BJ (cell line): ENCODE measurements at regions of chr11 and their contacts with region 1.

Region 1: GRCh38 chr11:82867495-82868082 is 32.6 kb downstream of the PRCP start:
- DNase-seq: no peak
- H3K4me3 ChIP-seq: no peak overlapping the region
- H3K27me3 ChIP-seq: no peaks in the 10 kb centered on the region
- CTCF ChIP-seq: peak; percentile 63

Region 2: DNA sequence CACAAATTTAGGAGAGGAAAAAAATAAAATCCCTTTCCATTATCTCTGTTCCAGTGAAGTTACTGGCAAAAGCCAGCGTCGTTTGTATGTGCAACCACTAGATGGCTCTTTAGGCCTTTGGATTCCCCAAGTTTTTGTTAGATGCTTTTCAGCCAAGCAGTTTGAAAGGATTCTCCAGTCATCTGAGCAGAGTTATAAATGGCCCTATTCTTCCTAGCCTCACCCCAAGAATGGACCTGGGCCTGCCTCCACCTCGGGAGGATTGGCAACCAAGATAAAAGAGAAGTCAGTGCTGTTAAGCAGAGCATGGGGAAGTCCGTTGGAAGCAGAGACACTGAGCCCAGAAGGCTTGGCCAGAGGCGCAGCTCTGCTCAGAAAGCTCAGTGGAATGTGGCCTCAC is 149.3 kb before region 1 on chr11:
- CTCF ChIA-PET with region 1: interaction called, 16 read pairs
- POLR2A ChIA-PET with region 1: no interaction called
- DNase-seq: peak; percentile 6
- H3K4me3 ChIP-seq: no peak overlapping the region
- H3K27me3 ChIP-seq: peaks cover 7% of the 10 kb centered on the region
- CTCF ChIP-seq: peak; percentile 85

Region 3: GRCh38 chr11:82775736-82776346 is 91.7 kb before region 1 on chr11:
- CTCF ChIA-PET with region 1: interaction called, 19 read pairs
- POLR2A ChIA-PET with region 1: no interaction called
- DNase-seq: no peak
- H3K4me3 ChIP-seq: no peak overlapping the region; the same call in 1 of the 2 replicates
- H3K27me3 ChIP-seq: peaks cover 2% of the 10 kb centered on the region; the same call in 1 of the 2 replicates
- CTCF ChIP-seq: peak; percentile 90

Region 4: DNA sequence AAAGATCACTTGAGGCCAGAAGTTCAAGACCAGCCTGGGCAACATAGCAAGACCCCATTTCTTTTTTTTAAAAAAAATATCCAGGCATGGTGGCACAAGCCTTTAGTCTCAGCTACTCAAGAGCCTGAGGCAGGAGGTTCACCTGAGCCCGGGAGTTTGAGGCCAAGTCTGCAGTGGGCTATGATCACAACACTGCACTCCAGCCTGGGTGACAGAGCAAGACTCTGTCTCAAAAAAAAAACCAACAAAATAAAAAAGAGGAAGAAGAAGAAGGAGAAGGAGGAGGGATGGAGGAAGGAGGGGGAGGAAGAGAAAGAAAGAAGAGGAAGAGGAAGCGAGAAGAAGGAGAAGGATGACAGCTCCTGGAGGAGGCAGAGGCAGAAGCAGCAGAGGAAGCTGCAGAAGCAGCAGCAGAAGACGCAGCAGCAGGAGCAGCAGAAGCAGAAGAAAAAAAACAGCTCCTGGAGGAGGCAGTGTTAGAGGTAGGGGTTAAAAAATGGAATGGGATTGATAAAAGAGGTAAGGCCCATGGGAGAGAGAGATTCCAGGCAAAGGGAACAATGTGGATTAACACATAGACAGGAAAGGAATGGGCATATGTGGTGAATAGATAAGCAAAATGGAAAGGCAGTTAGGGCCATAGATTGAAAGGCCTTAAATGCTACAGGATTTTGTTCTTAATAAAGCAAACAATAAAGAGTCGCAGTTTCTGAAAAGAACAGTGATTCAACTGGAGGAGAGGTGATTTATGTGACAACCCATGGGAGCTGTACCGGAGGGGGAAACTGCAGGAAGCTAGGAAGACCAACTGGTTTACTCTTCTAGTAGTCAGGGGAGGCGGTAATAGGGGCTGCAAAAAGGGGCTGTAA is 21.8 kb after region 1 on chr11:
- CTCF ChIA-PET with region 1: interaction called, 20 read pairs
- POLR2A ChIA-PET with region 1: no interaction called
- DNase-seq: no peak
- H3K4me3 ChIP-seq: no peak overlapping the region
- H3K27me3 ChIP-seq: no peaks in the 10 kb centered on the region
- CTCF ChIP-seq: no peak

Region 5: DNA sequence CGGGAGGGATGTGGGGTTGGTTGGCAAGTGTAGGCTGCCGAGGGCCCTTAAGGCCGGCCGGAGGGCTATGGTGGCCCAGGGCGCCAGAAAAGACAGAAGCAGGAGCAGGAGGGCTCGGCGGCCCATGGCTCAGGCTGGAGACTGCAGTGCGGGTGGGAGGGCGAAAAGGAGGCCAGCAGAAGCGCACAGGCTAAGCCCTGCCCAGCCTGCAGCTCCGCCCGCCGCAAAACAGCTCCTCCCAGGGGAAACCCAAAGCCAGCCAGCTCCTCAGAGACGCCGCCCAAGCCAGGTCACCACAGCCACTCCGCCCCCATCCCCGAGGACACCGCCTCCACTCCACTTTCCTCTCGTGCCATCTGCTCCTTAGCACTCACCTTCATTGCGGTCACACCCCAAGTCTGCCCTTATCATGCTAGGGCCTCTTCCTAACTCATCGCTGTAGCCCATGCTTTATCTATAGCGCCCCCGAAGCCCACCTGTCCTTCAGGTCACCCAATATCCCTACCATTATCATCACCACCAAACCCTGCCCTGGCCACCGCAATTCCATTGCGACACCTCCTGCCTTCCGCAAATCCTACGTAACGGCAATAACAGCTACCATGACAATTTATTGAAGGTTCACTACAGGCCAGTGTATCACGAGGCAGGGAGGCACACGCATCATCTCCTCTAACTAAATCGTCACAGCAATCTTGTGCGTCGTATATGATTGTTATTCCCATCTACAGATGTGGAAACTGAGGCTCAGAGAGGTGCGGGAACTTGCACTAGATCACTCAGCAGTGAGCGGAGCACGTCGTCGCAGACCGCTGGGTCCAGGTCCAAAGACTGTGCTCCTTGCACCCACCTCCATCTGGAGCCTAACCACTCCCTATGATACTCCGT is 32.9 kb after region 1 on chr11 and contains the start of gene PRCP:
- CTCF ChIA-PET with region 1: interaction called, 27 read pairs
- POLR2A ChIA-PET with region 1: no interaction called
- DNase-seq: peak; percentile 54
- H3K4me3 ChIP-seq: peak within 1 kb of the TSS; percentile 62
- H3K27me3 ChIP-seq: no peaks in the 10 kb centered on the region
- CTCF ChIP-seq: no peak
- polyA plus RNA-seq, gene PRCP: 62.0 and 127 TPM in 2 replicates

Region 6: DNA sequence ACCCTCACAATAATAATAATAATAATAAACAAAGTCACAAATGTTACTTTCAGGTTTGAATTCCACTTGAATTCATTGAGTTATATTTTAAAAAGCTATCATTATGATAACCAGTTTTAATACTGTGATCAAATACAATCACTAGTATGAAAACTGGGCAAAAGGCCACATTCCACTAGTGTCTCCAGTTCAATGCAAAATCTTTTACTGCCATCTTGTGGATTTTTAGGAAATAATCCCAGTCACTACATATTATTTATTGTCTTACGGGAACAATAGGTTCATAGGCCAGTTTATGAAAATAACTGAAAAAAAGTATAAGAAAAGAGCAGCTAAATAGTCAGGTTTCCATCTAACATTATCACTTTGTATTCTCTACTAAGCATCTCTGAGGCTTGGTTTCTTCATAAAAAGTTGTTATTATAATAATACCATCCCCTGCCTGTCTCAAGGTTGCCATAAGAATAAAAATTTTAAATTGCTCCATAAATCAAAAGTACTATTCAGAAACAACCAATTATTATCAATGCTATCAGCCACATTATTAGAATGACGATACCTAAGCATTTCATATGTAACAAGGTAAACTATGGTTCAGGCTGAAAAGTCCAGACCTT is 952.5 kb after region 1 on chr11:
- CTCF ChIA-PET with region 1: interaction called, 10 read pairs
- POLR2A ChIA-PET with region 1: no interaction called
- DNase-seq: peak; percentile 18
- H3K4me3 ChIP-seq: no peak overlapping the region
- H3K27me3 ChIP-seq: no peaks in the 10 kb centered on the region
- CTCF ChIP-seq: peak; percentile 59